CD8-positive, alpha-beta T cell (primary cell): ENCODE measurements at regions of chr3 and their contacts with region 1.

Region 1: GRCh38 chr3:124688581-124689454 is 41.4 kb upstream of the UMPS start:
- DNase-seq: peak; percentile 37 to 79 (median 68)
- ATAC-seq: peak; percentile 72
- H3K4me3 ChIP-seq: no peak overlapping the region
- H3K4me3 Mint-ChIP-seq: no peak overlapping the region
- H3K27ac ChIP-seq: no peak overlapping the region
- H3K27ac Mint-ChIP-seq: no peak overlapping the region
- H3K4me1 ChIP-seq: no peaks in the 10 kb centered on the region
- H3K4me1 Mint-ChIP-seq: peaks cover 3% of the 10 kb centered on the region
- H3K27me3 ChIP-seq: peaks cover 0 to 3% of the 10 kb centered on the region in 2 experiments
- H3K27me3 Mint-ChIP-seq: peaks cover 28% of the 10 kb centered on the region
- CTCF ChIP-seq: peak; percentile 84

Region 2: GRCh38 chr3:123899300-123899865 is 789.4 kb before region 1 on chr3:
- CTCF ChIA-PET with region 1: no interaction called
- POLR2A ChIA-PET with region 1: no interaction called
- intact Hi-C with region 1: no loop called
- DNase-seq: no peak
- ATAC-seq: no peak
- H3K4me3 ChIP-seq: no peak overlapping the region
- H3K4me3 Mint-ChIP-seq: no peak overlapping the region
- H3K27ac ChIP-seq: no peak overlapping the region
- H3K27ac Mint-ChIP-seq: no peak overlapping the region
- H3K4me1 ChIP-seq: no peaks in the 10 kb centered on the region
- H3K4me1 Mint-ChIP-seq: no peaks in the 10 kb centered on the region
- H3K27me3 ChIP-seq: no peaks in the 10 kb centered on the region
- H3K27me3 Mint-ChIP-seq: peaks cover 3% of the 10 kb centered on the region
- CTCF ChIP-seq: no peak

Region 3: DNA sequence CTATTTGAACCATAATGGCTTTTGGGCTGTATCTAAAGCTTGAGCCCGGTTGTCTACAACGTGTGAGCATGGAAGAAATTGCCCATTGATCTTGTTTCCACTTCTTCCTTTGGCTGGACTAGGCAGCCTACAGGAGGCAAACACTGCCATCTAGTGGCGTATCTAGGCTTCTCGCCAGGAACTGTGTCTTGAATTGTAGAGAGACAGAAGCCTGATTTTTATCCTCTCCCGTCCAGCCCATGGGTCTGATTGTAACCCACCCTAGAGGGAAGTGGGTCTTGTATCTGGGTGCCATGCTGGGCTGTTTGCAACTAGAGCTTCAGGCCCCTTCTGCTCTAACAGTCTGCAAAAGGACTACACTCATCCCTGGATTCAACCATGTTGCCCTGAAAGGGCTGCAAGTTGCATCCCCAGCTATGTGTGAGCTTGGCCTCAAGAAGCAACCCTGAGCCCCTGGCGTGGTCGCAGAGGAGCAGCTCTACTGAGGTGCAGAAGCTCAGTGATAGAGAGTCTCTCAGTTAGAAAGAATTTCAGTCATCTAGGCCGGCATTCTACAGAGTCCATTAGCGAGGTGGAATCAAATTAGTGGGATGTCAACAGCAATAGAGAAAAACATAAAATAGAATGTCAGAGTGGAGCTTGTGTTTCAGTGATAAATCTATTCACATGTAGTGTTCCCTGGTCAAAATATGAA is 128.8 kb before region 1 on chr3:
- CTCF ChIA-PET with region 1: interaction called, 47 read pairs
- POLR2A ChIA-PET with region 1: no interaction called
- intact Hi-C with region 1: loop called (anchors 1 kb)
- DNase-seq: peak in 8 of 9 experiments; percentile 10 to 65 (median 56)
- ATAC-seq: peak; percentile 40
- H3K4me3 ChIP-seq: no peak overlapping the region
- H3K4me3 Mint-ChIP-seq: no peak overlapping the region
- H3K27ac ChIP-seq: no peak overlapping the region
- H3K27ac Mint-ChIP-seq: no peak overlapping the region
- H3K4me1 ChIP-seq: no peaks in the 10 kb centered on the region
- H3K4me1 Mint-ChIP-seq: no peaks in the 10 kb centered on the region
- H3K27me3 ChIP-seq: peaks cover 0 to 3% of the 10 kb centered on the region in 2 experiments
- H3K27me3 Mint-ChIP-seq: peaks cover 37% of the 10 kb centered on the region
- CTCF ChIP-seq: peak; percentile 76

Region 4: GRCh38 chr3:124569761-124570160 is 119.1 kb before region 1 on chr3:
- CTCF ChIA-PET with region 1: interaction called, 47 read pairs
- POLR2A ChIA-PET with region 1: no interaction called
- intact Hi-C with region 1: loop called (anchors 1 kb)
- DNase-seq: no peak
- ATAC-seq: no peak
- H3K4me3 ChIP-seq: no peak overlapping the region
- H3K4me3 Mint-ChIP-seq: no peak overlapping the region
- H3K27ac ChIP-seq: no peak overlapping the region
- H3K27ac Mint-ChIP-seq: no peak overlapping the region
- H3K4me1 ChIP-seq: no peaks in the 10 kb centered on the region
- H3K4me1 Mint-ChIP-seq: no peaks in the 10 kb centered on the region
- H3K27me3 ChIP-seq: no peaks in the 10 kb centered on the region
- H3K27me3 Mint-ChIP-seq: peaks cover 4% of the 10 kb centered on the region
- CTCF ChIP-seq: no peak

Region 5: GRCh38 chr3:124620600-124621063 is 68.2 kb before region 1 on chr3:
- CTCF ChIA-PET with region 1: interaction called, 3 read pairs
- POLR2A ChIA-PET with region 1: no interaction called
- intact Hi-C with region 1: loop called in 1 of 2 experiments (anchors 2 kb)
- DNase-seq: peak in 7 of 9 experiments; percentile 9 to 55 (median 36)
- ATAC-seq: peak; percentile 51
- H3K4me3 ChIP-seq: no peak overlapping the region
- H3K4me3 Mint-ChIP-seq: peak overlapping the region; percentile 35
- H3K27ac ChIP-seq: peak overlapping the region in 1 of 2 experiments; percentile 52
- H3K27ac Mint-ChIP-seq: no peak overlapping the region
- H3K4me1 ChIP-seq: peaks cover 15% of the 10 kb centered on the region
- H3K4me1 Mint-ChIP-seq: peaks cover 20% of the 10 kb centered on the region
- H3K27me3 ChIP-seq: no peaks in the 10 kb centered on the region
- H3K27me3 Mint-ChIP-seq: no peaks in the 10 kb centered on the region
- CTCF ChIP-seq: no peak

Region 6: GRCh38 chr3:124699686-124700396 is 11.0 kb after region 1 on chr3:
- CTCF ChIA-PET with region 1: interaction called, 19 read pairs
- POLR2A ChIA-PET with region 1: no interaction called
- intact Hi-C with region 1: no loop called
- DNase-seq: no peak
- ATAC-seq: no peak
- H3K4me3 ChIP-seq: no peak overlapping the region
- H3K4me3 Mint-ChIP-seq: no peak overlapping the region
- H3K27ac ChIP-seq: no peak overlapping the region
- H3K27ac Mint-ChIP-seq: no peak overlapping the region
- H3K4me1 ChIP-seq: no peaks in the 10 kb centered on the region
- H3K4me1 Mint-ChIP-seq: no peaks in the 10 kb centered on the region
- H3K27me3 ChIP-seq: peaks cover 0 to 2% of the 10 kb centered on the region in 2 experiments
- H3K27me3 Mint-ChIP-seq: peaks cover 17% of the 10 kb centered on the region
- CTCF ChIP-seq: no peak